Activated B cell treated with CpG ODN at 0.5 μM for 24 hours (primary cell): ENCODE measurements at regions of chr6 and their contacts with region 1.

Region 1: GRCh38 chr6:132131758-132132157 is 180.6 kb upstream of the CCN2 start:
- DNase-seq: no peak
- ATAC-seq: peak; percentile 58
- H3K4me3 Mint-ChIP-seq: peak overlapping the region; percentile 21
- H3K27ac Mint-ChIP-seq: peak overlapping the region; percentile 72
- H3K4me1 Mint-ChIP-seq: peaks cover 68% of the 10 kb centered on the region
- H3K27me3 Mint-ChIP-seq: no peaks in the 10 kb centered on the region
- CTCF ChIP-seq: no peak

Region 2: DNA sequence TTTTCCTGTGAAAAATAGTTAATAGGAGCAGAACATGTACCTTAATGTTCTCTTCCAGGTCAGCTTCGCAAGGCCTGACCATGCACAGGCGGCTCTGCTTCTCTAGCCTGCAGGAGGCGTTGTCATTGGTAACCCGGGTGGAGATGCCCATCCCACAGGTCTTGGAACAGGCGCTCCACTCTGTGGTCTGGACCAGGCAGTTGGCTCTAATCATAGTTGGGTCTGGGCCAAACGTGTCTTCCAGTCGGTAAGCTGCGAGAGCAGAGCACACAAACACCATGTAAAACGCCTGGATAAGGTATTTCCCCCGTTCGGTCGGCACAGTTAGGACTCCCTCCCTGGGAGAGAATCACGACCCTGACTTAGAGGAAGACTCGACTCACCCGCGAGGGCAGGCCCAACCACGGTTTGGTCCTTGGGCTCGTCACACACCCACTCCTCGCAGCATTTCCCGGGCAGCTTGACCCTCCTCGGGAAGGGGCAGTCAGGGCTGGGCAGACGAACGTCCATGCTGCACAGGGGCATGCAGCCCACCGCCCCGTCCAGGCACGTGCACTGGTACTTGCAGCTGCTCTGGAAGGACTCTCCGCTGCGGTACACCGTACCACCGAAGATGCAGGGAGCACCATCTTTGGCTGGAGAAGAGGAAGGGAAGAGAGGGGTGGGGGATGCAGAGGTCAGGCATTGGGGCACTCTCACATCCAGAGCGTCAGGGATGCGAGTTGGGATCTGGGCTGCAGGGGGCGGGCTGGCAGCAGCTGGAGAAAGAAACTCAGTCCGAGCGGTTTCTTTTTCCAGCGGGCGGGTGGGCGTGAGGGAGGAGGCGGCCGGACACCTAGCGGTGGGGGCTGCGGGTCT is 181.6 kb before region 1 on chr6:
- CTCF ChIA-PET with region 1: no interaction called
- POLR2A ChIA-PET with region 1: no interaction called
- intact Hi-C with region 1: loop called (anchors 10 kb)
- DNase-seq: peak; percentile 21
- ATAC-seq: peak; percentile 72
- H3K4me3 Mint-ChIP-seq: peak overlapping the region; percentile 86
- H3K27ac Mint-ChIP-seq: no peak overlapping the region
- H3K4me1 Mint-ChIP-seq: peaks cover 18% of the 10 kb centered on the region
- H3K27me3 Mint-ChIP-seq: peaks cover 36% of the 10 kb centered on the region
- CTCF ChIP-seq: no peak

Region 3: DNA sequence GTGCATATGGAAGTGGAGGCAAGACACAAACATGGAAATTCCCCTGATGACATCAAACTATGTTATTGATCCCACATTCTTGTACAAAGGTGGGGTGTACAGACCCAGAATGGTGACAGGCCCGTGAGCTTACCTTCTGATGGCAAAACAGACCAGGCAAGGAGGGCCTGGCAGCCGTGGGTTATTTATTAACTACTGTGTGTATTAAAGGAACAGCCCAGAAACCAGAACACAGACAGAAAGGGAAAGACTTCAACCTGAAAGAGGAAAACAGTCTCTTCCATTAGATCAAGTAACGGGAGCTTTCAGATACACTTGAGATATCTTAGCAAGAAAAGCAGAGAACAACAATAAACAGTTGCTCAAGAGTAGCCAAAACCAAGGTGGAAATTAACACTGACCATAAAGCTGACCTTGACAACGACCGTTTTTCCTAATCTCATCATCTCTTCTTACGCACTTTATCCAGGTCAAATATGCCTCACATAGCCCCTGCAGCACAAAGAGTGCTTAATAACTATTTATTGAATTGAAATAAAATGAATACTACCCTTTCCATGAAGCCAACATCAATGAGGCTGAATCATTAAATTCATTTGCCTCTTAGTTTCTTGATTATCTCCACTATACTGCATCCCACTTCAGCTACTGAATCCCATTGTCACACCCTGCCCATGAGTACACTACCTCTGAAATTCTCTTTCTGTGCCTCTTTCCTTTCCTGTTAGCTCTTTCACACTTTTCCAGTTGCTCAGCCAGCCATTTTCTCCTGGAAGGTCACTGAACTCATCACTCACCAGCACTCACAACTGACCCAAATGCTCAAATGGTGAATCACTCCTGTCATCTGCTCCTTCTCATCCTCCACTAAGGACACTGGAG is 202.1 kb after region 1 on chr6:
- CTCF ChIA-PET with region 1: no interaction called
- POLR2A ChIA-PET with region 1: no interaction called
- intact Hi-C with region 1: no loop called
- DNase-seq: no peak
- ATAC-seq: no peak
- H3K4me3 Mint-ChIP-seq: no peak overlapping the region
- H3K27ac Mint-ChIP-seq: no peak overlapping the region
- H3K4me1 Mint-ChIP-seq: peaks cover 3% of the 10 kb centered on the region
- H3K27me3 Mint-ChIP-seq: peaks cover 4% of the 10 kb centered on the region
- CTCF ChIP-seq: no peak

Region 4: DNA sequence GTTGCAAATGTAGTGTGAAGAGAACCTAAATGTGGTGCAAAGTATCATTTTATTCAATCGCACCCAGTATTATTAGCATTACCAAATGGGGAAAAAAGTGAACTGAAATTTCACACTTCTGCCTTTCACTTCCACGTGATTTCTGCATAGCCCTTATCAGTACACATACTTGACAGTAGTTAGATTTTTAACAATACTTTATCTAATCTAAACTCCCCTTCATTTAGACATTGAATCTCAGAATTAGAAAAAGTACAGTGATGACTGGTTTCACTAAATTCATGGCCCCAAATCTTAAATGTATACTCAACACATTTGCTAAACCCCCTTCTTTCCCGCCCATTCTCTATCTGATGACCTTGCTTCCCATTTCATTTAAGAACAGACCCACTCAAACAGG is 366.9 kb after region 1 on chr6:
- CTCF ChIA-PET with region 1: no interaction called
- POLR2A ChIA-PET with region 1: no interaction called
- intact Hi-C with region 1: loop called (anchors 5 kb)
- DNase-seq: no peak
- ATAC-seq: peak; percentile 67
- H3K4me3 Mint-ChIP-seq: peak overlapping the region; percentile 55
- H3K27ac Mint-ChIP-seq: peak overlapping the region; percentile 92
- H3K4me1 Mint-ChIP-seq: peaks cover 90% of the 10 kb centered on the region
- H3K27me3 Mint-ChIP-seq: no peaks in the 10 kb centered on the region
- CTCF ChIP-seq: no peak